GM10248 (cell line): ENCODE measurements at regions of chr6 and their contacts with region 1.

Region 1: DNA sequence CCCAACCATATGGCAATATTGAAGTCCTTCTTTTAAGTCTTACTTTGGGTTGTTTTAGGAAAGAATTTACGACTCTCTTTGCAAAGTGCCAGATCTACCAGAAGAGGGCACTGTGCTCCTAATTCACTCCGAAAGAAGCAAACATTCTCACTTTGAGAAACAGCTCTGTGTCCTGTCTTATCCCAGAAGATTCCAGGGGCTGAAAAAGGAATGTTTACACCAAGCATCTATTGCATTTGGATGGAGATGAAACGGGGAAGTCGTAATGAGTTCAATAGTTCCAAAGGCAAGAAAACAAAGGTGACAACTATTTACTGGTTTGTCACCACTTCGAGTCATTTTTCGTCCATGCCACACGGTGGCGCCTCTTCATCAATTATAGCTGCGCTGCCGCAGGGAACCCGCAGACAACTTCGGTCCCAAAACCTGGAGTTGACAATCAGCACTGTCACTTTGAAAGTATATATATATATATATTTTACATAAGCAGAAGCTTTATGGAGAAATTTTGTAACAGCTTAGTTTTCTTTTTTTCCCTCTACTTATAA is 121.6 kb downstream of the MOXD1 start:
- DNase-seq: peak; percentile 65
- CTCF ChIP-seq: peak; percentile 77

Region 2: DNA sequence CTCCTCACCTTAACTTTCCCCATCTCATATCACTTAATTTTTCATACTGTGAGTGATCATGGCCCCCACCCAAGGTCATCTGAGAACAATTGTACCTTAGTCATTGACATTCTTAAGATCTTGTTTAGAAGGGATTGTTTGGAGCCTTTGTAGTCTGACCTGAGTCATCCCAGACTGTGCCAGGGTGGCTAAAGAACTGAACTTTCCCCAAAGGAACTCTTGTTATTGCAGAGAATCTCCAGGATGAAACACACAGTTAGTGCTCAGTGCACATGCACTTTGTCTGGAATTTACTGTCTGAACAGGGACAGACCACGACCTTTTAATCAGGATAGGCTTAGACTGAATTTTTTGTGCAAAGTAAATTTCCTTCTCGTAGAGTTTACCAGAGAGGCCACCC is 215.9 kb before region 1 on chr6:
- CTCF ChIA-PET with region 1: no interaction called
- POLR2A ChIA-PET with region 1: no interaction called
- DNase-seq: no peak
- CTCF ChIP-seq: no peak

Region 3: DNA sequence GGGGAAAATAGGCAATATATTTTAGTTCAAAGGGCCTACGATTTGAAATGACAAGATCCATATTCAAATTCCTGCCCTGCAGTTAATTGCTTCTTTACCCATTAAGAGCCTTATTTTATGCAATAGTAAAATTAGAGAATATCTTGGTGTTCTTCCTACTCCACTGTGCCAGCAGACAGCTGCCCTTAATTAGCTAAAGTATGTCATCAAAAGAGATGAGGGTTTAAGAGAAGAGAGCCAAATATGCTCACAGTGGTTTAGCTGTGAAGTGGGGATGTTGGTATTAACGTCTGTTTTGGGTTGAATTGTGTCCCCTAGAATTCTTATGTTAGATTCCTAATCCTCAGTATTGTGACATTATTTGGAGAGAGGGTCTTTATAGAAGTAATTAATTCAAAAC is 26.5 kb before region 1 on chr6:
- CTCF ChIA-PET with region 1: interaction called, 12 read pairs
- POLR2A ChIA-PET with region 1: no interaction called
- DNase-seq: no peak
- CTCF ChIP-seq: no peak

Region 4: GRCh38 chr6:132314432-132314831 is 34.8 kb after region 1 on chr6:
- CTCF ChIA-PET with region 1: interaction called, 18 read pairs
- POLR2A ChIA-PET with region 1: no interaction called
- DNase-seq: no peak
- CTCF ChIP-seq: no peak

Region 5: DNA sequence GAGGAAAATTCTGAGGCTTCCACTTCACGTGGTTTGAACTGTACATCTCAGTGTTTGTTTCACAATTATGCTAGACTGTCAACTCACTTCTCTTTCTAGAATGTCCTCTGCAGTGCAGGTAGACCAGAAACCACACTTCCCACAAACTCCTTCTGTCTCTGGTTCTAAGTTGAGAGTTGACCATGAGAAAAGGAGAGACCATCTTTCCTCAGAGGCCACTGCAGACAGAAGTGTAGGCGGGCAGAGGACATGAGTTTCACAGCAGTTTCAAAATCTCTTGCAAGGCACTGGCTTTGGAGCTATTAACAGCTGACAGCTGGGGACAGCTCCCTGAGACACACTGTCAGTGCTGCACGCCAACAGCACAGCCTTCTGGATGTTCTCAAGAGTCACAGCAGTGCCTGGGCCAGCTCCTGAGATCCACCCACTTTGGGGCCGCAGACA is 177.1 kb after region 1 on chr6:
- CTCF ChIA-PET with region 1: interaction called, 24 read pairs
- POLR2A ChIA-PET with region 1: no interaction called
- DNase-seq: peak; percentile 65
- CTCF ChIP-seq: peak; percentile 74

Region 6: GRCh38 chr6:132498638-132499037 is 219.0 kb after region 1 on chr6:
- CTCF ChIA-PET with region 1: interaction called, 29 read pairs
- POLR2A ChIA-PET with region 1: no interaction called
- DNase-seq: no peak
- CTCF ChIP-seq: no peak

Region 7: DNA sequence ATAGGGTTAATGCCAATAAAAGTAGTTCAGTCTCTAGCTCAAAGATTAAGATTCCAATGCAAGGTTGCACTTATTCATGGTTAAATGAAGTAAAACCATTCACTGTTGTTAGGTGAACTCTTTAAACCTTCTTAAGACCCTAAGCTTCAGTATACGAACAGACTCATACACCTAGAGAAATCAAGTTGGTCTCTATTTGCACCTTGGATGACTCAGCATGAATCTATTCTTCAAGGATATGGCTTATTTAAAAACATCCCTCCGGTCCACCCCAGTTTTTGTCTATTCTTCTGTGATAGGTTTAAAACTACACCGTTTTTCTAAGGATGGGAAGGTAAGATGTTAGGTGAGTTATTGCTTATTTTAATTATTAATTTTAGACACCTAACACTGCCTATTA is 257.5 kb after region 1 on chr6:
- CTCF ChIA-PET with region 1: interaction called, 10 read pairs
- POLR2A ChIA-PET with region 1: no interaction called
- DNase-seq: no peak
- CTCF ChIP-seq: no peak